ENCODE measurements at regions of chrX and their contacts with region 1.

Region 1: DNA sequence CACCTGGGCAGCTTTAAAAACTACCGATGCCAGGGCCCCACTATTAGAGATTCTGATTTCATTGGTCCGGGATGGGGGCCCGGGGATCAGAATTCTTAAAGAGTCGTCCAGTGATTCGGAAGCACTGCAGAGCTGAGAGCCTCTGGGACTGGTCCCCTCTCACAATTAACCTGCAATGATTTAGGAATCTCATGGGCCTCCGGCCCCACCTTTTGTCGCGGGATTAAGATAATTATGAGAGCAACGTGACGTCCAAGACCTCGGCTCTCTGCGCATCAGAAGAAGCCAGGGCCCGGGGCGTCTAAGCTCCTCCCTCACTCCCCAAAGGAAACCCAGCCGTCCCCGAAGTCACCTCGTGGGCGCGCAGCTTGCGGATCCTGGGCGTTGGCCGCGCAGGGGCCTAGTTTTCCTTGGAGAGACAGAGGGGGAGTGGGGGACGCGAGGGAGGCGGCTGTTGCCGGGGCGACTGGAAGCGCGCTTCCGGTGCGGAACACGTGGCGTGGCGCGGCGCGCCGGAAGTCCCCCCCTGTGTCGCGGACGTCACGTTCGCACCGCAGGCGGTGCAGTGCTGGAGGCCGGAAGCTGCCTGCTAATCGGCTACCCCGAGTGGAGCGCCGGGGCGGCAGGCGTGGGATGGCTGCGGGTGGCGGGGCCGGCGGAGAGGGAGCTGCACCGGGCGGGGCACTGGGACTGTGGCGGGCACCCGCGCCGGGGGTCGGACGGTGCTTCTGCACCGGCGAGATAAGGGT is at the start of gene GEMIN8:
- DNase-seq: peak; percentile 83
- CTCF ChIP-seq: no peak

Region 2: DNA sequence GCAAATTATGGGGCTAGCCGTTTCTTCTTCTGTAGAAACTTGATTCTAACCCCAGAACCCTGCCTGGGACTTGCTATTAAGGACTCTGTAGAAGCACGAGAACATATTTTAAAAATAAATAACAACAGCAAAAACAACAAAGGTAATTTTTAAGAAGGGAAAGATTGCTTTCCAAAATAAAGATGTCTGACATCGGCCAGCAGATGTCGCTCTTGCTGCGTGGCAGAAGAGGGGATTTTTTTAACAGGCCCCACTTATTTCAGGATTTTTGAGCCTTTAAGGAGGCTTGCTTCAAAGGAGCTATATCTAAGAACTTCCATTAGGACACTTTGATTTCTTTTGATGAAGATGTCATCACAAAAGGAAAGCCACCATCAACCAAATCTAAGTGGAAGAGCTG is 523.0 kb before region 1 on chrX:
- in situ Hi-C with region 1: loop called (anchors 10 kb)
- DNase-seq: peak; percentile 62
- CTCF ChIP-seq: peak; percentile 74

Region 3: GRCh38 chrX:13658602-13659001 is 371.0 kb before region 1 on chrX:
- in situ Hi-C with region 1: loop called (anchors 5 kb)
- DNase-seq: peak; percentile 38
- CTCF ChIP-seq: peak; percentile 54

Region 4: GRCh38 chrX:13750204-13750603 is 279.4 kb before region 1 on chrX:
- in situ Hi-C with region 1: loop called (anchors 25 kb)
- DNase-seq: peak; percentile 33
- CTCF ChIP-seq: peak; percentile 66

Region 5: DNA sequence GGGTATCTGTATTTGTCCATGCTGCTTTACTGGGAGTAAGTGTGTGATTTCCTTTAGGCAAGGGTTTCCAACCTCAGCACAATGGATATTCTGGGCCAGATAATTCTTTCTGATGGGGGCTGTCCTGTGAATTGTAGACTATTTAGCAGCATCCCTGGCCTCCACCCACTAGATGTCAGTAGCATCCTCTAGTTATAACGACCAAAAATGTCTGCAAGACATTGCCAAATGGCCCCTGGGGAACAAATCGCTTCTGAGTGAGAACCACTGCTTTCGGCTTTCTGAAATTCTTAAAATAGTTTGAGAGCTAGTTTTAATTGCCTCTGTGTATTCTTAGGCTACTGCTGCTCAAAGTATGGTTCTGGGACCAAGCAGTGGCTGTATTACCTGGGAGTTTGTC is 131.5 kb before region 1 on chrX:
- in situ Hi-C with region 1: loop called (anchors 10 kb)
- DNase-seq: peak; percentile 22
- CTCF ChIP-seq: peak; percentile 51

Region 6: GRCh38 chrX:13952581-13952980 is 77.0 kb before region 1 on chrX:
- in situ Hi-C with region 1: no loop called
- DNase-seq: no peak
- CTCF ChIP-seq: no peak

Measured in GM13977 (cell line).